ENCODE measurements at regions of chr12 and their contacts with region 1.

Region 1: GRCh38 chr12:51307655-51308593 is 16.1 kb downstream of the BIN2 start:
- DNase-seq: peak; percentile 94
- ATAC-seq: peak; percentile 100
- H3K4me3 ChIP-seq: peak overlapping the region; percentile 46
- H3K27ac ChIP-seq: peak overlapping the region; percentile 91
- H3K4me1 ChIP-seq: peaks cover 19% of the 10 kb centered on the region
- H3K27me3 ChIP-seq: no peaks in the 10 kb centered on the region
- CTCF ChIP-seq: no peak

Region 2: DNA sequence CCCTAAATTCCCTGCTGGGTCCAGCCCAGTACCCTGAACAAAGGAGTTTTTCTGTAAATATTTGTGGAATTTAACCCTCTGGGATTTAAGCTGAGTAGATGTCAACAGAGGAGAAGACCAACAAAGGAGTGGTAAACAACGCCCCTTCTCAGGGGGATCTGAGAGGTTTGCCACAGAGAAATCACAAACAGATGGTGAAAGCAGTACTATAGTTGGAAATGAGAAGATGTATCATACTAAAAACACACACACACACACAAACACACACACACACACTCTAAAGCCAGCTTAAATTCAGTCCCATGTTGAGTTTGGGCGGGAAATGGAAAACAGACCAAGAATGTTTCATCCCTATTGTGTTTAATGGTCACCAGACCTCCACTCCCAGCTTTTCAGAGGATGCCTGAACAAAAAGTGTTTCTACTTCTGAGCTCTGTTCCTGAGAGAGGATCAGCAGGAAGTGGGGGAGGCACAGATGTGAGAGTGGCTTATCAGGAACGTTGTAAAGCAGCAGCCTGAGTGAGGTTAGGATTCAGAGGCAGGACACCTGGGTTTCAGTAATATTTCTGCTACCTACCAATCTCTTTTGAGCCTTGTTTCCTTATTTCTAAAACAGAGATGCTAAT is 12.9 kb after region 1 on chr12:
- CTCF ChIA-PET with region 1: no interaction called
- POLR2A ChIA-PET with region 1: interaction called, 10 read pairs
- intact Hi-C with region 1: no loop called
- DNase-seq: no peak
- ATAC-seq: no peak
- H3K4me3 ChIP-seq: no peak overlapping the region
- H3K27ac ChIP-seq: no peak overlapping the region
- H3K4me1 ChIP-seq: peaks cover 9% of the 10 kb centered on the region
- H3K27me3 ChIP-seq: no peaks in the 10 kb centered on the region
- CTCF ChIP-seq: no peak

Region 3: DNA sequence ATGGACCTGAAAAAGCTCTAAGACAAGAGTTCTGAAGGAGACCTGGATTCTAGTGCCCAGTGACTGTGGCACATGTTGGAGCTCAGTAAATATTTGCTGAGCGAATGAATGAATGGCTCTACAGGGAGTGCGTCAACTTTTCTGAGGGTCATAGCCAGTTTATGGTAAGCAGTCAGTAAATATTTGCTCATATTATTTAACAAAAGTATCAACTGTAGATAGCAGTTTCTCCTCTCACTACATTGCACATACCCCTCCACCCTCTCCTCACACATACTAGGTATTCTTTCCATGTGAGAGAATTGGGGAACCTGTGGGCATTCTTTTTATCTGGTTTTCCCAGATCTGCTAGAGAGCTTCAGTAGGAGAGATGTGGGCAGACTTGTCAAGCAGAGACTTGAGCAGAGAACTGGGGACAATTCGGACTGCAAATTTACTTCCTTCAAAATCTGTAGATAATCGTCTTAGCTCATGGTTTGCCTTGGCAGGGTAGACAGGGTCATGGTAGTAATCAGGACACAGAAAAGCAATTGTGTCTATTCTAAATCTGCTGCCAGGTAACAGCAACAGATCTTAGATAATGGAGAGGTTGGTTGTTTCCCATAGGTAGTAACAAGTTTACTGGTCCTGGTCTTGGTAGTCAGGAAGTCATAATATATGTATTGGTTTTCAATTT is 122.4 kb after region 1 on chr12:
- CTCF ChIA-PET with region 1: no interaction called
- POLR2A ChIA-PET with region 1: no interaction called
- intact Hi-C with region 1: no loop called
- DNase-seq: peak; percentile 83
- ATAC-seq: peak; percentile 86
- H3K4me3 ChIP-seq: peak overlapping the region; percentile 6; the same call in 1 of the 2 replicates
- H3K27ac ChIP-seq: peak overlapping the region; percentile 84
- H3K4me1 ChIP-seq: peaks cover 32% of the 10 kb centered on the region
- H3K27me3 ChIP-seq: no peaks in the 10 kb centered on the region
- CTCF ChIP-seq: no peak

Measured in PC-3 (cell line).